Right cardiac atrium (tissue), 5 donors: ENCODE measurements at regions of chr5 and their contacts with region 1.

Region 1: DNA sequence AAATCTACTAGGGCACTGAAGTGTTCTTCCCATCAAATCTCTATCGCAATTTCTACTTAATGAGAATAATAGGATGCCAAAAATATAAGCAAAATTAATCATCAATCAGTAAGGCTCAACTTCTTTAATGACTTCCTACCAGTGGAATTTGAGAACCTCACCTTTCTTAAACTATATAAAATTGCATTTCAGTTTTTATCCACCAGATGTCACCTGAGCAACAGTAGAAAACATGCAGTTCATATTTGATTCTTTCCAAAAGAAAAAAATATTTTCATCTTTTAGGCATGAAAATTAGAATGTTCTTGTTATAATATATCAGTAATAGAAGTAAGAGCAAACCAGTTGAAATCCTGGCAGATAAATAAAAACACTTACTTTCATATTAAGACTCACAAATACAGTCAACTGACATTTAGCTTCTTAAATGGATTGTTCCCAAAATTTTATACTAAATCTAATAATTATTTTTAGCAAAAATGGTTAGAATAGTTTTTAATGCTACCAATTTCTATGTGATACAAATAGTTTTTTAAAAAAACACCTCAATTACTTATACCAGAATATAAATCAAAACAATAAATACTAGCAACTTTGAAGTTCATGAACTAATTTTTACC is 13.4 kb upstream of the CCDC112 start:
- DNase-seq: no peak
- ATAC-seq: no peak
- H3K4me3 ChIP-seq: no peak overlapping the region
- H3K27ac ChIP-seq: no peak overlapping the region
- H3K4me1 ChIP-seq: no peaks in the 10 kb centered on the region
- H3K27me3 ChIP-seq: no peaks in the 10 kb centered on the region

Region 2: GRCh38 chr5:115571441-115571878 is 261.6 kb after region 1 on chr5:
- intact Hi-C with region 1: loop called in 3 of 4 experiments (anchors 5 kb)
- DNase-seq: peak in 2 of 3 donors; percentile 17 to 28
- ATAC-seq: peak; percentile 88 to 94
- H3K4me3 ChIP-seq: no peak overlapping the region
- H3K27ac ChIP-seq: no peak overlapping the region
- H3K4me1 ChIP-seq: no peaks in the 10 kb centered on the region
- H3K27me3 ChIP-seq: no peaks in the 10 kb centered on the region

Region 3: DNA sequence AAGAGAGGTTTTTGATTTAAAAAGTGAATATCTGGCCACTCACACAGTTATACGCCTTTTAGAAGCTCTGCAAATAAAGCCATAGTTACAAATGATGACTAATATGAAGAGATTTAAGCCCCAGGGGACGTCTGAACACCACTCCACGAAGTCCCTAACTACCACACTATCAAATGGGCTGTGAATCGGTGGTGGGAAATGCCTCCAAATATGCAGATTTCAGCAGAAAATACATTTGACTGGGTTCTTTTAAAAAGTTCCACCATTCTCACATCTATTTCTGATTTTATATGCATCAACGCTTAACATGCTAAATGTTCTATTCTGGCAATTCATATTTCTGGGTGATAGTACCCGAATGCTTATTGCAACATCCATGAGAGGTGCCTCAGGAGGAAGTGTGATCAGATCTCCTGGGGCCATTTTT is 269.9 kb after region 1 on chr5:
- intact Hi-C with region 1: loop called in 3 of 4 experiments (anchors 2 to 5 kb)
- DNase-seq: no peak
- ATAC-seq: no peak
- H3K4me3 ChIP-seq: no peak overlapping the region
- H3K27ac ChIP-seq: no peak overlapping the region
- H3K4me1 ChIP-seq: peaks cover 3% of the 10 kb centered on the region
- H3K27me3 ChIP-seq: no peaks in the 10 kb centered on the region

Region 4: DNA sequence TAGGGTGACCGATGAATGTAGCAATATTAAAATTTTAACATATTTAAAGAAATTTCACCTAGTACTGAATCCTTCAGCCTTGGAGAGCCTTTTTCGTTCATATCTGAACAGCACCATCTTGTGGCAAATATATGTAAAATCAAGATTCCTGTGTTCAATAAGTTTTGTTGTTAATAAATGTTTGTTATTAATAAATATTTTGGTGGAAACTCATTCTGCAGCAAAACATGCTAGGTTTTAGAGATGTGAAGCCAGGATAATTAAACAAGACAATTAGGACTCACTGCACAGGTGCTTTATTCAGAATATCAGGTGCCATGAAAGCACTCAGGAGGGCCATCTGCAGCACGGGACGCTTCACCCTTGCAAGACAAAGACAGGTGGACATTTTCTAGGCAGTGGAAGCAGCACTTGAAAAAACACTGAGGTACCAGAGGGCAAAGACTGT is 276.8 kb after region 1 on chr5:
- intact Hi-C with region 1: loop called (anchors 2 to 5 kb)
- DNase-seq: no peak
- ATAC-seq: no peak
- H3K4me3 ChIP-seq: no peak overlapping the region
- H3K27ac ChIP-seq: no peak overlapping the region
- H3K4me1 ChIP-seq: peaks cover 5% of the 10 kb centered on the region
- H3K27me3 ChIP-seq: no peaks in the 10 kb centered on the region